ENCODE measurements at regions of chr4 and their contacts with region 1.

Region 1: DNA sequence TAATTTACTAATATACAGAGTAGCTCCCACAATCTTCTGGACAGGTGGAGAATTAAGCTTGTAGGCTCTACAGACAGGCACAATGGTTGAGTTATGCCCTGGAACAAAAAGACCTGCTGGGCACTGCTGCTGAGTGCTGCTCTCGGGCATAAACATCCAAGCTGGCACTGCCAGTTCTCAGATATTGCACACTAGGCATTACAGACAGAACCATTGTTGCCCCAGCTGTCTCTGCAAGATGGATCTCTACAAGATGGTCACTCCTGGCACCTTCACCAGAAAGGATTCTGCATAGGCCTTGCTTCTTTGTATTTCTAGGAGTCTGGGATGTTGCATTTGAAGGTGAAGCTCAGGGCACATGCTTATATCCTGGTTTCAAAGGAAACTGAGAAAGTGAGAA is 527.1 kb downstream of the STIM2 start:
- DNase-seq: no peak

Region 2: DNA sequence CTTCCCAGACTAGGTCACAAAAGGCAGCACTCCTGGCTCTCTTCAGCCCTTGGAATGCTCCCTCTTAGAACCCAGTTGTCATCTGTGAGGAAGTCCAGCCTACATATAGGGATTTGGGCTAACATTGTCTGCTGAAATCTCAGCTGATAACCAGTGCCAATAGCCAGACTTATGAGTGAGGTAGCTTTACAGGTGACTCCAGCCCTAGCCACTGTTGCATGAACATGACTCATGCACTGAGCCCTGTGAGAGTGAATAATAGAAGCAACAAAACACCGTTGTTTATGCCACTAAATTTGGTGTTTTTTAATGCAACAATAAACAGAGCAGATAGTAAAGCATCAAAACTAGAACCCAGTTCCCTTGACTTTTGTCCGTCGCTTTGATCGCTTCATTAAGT is 93.9 kb before region 1 on chr4:
- intact Hi-C with region 1: no loop called
- DNase-seq: no peak

Region 3: GRCh38 chr4:27412613-27413012 is 24.9 kb after region 1 on chr4:
- intact Hi-C with region 1: loop called in 1 of 2 experiments (anchors 1 kb)
- DNase-seq: no peak

Region 4: GRCh38 chr4:27429364-27429871 is 41.7 kb after region 1 on chr4:
- intact Hi-C with region 1: no loop called
- DNase-seq: no peak

Region 5: DNA sequence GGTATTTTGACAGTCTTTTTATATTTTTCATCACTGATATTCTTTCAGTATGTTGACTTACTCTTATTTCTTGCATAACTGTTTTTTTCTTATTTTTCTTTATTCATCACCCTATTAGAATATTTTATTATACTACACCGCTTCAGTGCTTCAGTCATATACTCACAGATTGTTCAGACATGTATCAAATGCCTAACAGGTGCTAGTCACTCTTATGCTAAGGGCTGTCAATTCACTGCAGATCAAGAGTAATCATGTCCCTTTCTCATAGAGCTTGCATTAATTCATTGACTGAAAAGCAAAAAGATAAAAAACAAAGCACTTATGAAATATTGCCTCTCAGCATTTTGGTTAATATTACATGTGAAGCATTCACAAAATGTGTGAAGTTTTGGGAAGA is 908.5 kb after region 1 on chr4:
- intact Hi-C with region 1: no loop called
- DNase-seq: no peak

Measured in posterior vena cava (tissue), 2 donors.